Astrocyte of the cerebellum (primary cell): ENCODE measurements at regions of chr14 and their contacts with region 1.

Region 1: GRCh38 chr14:95183532-95184412 is 26.4 kb upstream of the DICER1 start:
- DNase-seq: no peak
- H3K4me3 ChIP-seq: no peak overlapping the region
- CTCF ChIP-seq: no peak

Region 2: GRCh38 chr14:95011445-95012006 is 172.2 kb before region 1 on chr14:
- in situ Hi-C with region 1: no loop called
- DNase-seq: no peak
- H3K4me3 ChIP-seq: no peak overlapping the region
- CTCF ChIP-seq: no peak

Region 3: GRCh38 chr14:95123891-95124579 is 59.7 kb before region 1 on chr14:
- in situ Hi-C with region 1: no loop called
- DNase-seq: no peak
- H3K4me3 ChIP-seq: no peak overlapping the region
- CTCF ChIP-seq: no peak

Region 4: GRCh38 chr14:95140060-95140858 is 43.5 kb before region 1 on chr14:
- in situ Hi-C with region 1: no loop called
- DNase-seq: no peak
- H3K4me3 ChIP-seq: no peak overlapping the region
- CTCF ChIP-seq: no peak

Region 5: DNA sequence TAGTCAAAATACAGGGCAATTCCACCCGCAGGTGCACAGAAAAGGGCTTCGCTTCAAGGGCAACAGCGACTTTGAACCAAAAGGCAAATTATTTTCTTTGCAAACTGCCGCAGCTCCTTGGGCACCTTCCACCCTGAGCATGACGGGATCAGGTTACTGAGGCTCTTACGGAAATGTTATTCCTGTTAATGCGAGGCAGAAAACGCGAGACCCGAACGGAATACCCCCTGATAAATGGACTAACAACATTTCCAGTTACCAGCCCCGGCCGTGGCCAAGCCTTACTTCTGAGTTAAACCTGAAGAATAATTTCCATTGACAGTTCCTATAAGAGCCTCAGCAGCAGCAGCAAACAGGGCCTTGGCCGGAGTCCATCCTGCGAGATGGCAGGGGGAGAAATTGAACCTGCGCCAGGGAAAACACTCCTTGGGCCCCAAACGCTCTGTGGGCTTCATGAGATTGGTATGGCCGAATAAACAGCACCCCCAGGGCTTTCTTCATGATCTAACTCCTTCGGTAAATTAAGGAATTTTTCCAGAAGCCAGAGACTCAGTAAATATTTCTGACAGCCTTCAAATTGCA is 43.6 kb after region 1 on chr14:
- in situ Hi-C with region 1: loop called (anchors 5 kb)
- DNase-seq: peak; percentile 56
- H3K4me3 ChIP-seq: peak overlapping the region; percentile 1
- CTCF ChIP-seq: no peak

Region 6: DNA sequence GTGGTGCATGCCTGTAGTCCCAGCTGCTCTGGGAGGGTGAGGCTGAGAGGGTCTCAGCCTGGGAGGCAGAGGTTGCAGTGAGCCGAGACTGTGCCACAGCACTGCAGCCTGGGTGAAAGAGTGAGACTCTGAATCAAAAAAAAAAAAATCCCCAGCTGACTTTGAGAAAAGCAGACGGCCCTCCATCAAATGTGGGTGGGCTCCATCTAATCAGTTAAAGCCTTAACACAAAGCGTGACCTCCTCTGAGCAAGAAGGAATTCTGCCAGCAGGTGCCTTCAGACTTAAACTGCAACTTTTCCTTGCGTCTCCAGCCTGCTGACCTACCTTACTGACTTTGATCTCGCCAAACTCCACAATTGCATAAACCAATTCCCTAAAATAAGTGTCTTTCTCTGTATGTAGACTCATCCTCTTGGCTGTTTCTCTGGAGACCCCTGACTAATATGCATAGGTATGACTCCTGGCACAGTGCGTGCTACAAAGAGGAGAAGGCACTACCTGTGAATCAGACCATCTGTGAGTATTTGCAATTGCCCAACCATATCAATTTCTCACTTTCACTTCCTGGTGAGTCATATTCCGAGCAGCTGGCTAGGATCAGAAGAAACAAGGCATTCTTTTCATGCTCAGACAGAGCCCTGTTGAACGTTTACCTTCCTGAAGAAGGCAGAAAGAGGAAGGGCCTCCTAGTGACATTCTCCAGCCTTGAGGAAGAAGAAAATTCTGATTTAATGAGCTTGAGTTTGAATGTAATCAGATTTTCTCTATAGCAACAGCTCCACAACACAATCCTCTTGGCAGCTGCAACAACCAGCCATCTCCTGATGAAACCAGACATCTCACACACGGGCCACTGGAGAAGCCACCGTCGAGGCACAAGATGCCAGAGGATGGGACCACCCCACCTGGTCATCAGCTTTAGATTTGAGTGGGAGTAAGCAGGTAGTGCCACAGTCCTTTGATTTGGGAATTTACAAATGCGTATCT is 81.6 kb after region 1 on chr14:
- in situ Hi-C with region 1: no loop called
- DNase-seq: peak; percentile 88
- H3K4me3 ChIP-seq: no peak overlapping the region
- CTCF ChIP-seq: no peak